Ovary (tissue), 10 donors: ENCODE measurements at regions of chr17 and their contacts with region 1.

Region 1: GRCh38 chr17:45828628-45829027 is 16.1 kb upstream of the SPPL2C start:
- DNase-seq: no peak
- H3K4me3 ChIP-seq: no peak overlapping the region
- H3K27ac ChIP-seq: no peak overlapping the region
- H3K4me1 ChIP-seq: no peaks in the 10 kb centered on the region
- H3K27me3 ChIP-seq: no peaks in the 10 kb centered on the region
- CTCF ChIP-seq: no peak
- EP300 ChIP-seq: no peak
- POLR2A ChIP-seq: no peak

Region 2: DNA sequence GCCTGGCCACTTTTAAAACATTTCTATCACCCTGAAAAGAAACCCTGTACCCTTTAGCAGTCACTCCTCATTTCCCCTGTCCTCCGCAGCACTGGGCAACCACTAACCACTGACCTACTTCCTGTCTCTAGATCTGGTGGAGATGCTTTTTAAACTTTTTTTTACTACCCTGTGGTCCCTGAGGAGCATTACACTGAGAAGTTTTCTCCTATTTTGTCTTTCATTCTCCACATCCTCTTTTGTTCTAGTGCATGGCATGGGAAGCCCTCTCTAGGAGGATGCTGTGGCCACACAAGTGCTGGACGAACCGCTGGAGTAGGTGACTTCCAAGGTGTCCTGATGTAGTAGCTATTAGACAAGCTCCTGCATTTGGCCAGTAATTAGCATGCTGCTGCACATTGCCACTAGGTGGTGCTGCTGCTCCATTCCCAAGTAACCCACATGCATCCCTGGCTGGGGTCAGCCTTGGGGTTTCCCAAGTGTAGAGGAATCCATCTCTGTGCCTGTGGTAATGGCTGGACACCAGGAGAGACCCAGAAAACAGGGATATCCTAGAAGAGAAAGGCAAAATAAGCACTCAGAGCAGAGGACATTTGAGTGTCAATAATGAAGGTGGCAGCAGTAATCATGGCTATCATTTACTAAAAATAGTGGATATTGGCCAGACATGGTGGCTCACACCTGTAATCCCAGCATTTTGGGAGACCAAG is 188.3 kb before region 1 on chr17:
- intact Hi-C with region 1: loop called (anchors 5 kb)
- DNase-seq: peak; percentile 64 to 78 (median 75)
- H3K4me3 ChIP-seq: no peak overlapping the region
- H3K27ac ChIP-seq: no peak overlapping the region
- H3K4me1 ChIP-seq: no peaks in the 10 kb centered on the region
- H3K27me3 ChIP-seq: no peaks in the 10 kb centered on the region
- CTCF ChIP-seq: peak; percentile 64 to 80 (median 80)
- EP300 ChIP-seq: no peak
- POLR2A ChIP-seq: no peak

Region 3: DNA sequence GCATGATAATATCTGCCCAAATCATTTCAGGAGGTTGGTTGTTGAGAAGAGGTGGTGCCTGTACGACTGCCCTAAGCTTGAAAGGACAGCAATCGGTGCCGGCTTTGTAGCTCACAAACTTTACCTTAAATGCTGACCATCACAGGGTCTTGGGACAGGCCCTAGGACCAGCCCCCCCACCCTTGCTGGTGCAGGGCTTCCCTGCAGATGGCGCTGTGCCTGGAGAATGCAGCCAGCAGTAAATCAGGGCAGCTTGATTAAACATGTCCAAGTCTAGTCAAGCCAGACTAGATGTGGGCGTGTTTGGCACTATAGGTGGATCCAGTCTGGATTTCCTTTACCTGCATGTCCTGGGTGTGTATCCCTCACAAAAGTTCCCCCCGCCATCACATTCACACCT is 180.0 kb before region 1 on chr17:
- intact Hi-C with region 1: loop called (anchors 5 kb)
- DNase-seq: no peak
- H3K4me3 ChIP-seq: no peak overlapping the region
- H3K27ac ChIP-seq: no peak overlapping the region
- H3K4me1 ChIP-seq: no peaks in the 10 kb centered on the region
- H3K27me3 ChIP-seq: no peaks in the 10 kb centered on the region
- CTCF ChIP-seq: no peak
- EP300 ChIP-seq: no peak
- POLR2A ChIP-seq: no peak